ENCODE measurements at regions of chr17 and their contacts with region 1.

Region 1: DNA sequence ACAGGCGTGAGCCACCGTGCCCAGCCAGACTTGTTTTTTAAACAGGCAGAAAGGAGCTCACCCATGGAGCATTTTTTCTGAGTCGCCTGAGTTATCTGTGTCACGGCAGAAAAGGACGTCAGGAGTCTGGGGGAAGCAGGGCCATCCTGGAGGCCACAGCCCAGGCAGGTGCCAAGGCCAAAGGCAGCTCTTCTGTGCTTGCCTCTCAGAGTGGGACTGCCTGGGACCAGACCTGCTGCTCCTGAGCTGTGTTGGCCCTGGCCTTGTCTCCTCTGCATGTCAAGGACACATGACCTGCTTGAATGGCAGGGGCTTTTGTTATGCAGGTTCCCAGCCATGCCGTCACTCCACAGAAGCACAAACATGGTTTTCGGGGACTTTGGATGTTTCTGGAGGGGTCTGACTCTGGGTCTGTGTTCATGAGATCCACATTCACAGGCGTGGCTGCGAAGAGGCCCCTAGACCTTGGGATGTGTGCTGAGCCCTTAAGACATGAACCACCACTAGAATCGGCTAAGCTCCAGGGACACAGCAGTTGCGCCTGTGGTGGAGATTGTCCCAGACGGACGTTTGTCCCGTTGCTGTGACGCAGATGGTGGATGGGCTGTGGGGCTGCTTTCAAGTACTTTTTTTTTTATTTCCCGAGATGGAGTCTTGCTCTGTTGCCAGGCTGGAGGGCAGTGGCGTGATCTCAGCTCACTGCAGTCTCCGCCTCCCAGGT is 33.8 kb downstream of the FOXK2 start:
- DNase-seq: peak; percentile 29
- ATAC-seq: peak; percentile 55
- H3K4me3 Mint-ChIP-seq: no peak overlapping the region
- H3K27ac Mint-ChIP-seq: peak overlapping the region; percentile 93
- H3K4me1 Mint-ChIP-seq: peaks cover 35% of the 10 kb centered on the region
- H3K27me3 Mint-ChIP-seq: no peaks in the 10 kb centered on the region
- CTCF ChIP-seq: no peak

Region 2: DNA sequence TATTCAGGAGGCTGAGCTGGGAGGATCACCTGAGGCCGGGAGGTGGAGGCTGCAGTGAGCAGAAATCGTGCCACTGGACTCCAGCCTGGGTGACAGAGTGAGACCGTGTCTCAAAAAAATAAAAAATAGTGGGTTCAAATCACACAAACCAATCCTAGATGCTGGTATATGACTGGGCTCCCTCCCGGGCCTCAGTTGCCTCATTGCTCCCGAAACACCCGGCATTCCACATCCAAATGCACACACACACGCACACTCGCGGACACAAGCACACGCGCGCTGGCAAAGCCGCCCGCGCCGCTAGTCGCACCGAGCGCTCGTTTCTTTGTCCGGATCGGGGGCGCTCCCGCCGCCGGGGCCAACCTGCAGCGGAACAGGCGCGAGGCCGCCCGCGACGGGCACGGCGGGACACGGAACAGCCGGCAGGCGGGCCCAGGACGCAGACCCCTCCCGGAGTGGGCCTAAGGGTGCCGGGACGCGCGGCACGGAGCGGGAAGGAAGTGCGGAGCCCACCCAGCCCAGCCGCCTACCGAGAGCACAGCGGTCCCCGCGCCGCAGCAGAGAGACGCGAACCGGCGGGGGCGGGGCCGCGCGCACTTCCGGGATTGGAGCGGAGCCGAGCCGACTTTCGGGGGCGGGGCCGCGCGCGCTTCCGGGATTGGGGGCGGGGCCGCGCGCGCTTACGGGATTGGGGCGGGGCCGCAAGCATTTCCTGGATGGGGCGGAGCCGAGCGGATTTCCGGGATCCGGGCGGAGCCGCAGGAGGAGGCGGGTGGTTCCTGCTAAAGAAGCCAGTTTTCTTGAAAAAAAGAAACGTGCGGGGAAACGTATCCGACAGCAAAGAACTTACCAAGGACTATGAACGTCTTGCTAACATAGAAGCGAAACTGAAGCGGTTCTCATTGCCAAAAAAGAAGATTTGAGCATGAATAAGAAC is 102.9 kb before region 1 on chr17 and contains the start of gene CYBC1:
- CTCF ChIA-PET with region 1: no interaction called
- POLR2A ChIA-PET with region 1: no interaction called
- DNase-seq: peak; percentile 90
- ATAC-seq: peak; percentile 86
- H3K4me3 Mint-ChIP-seq: peak within 1 kb of the TSS; percentile 76
- H3K27ac Mint-ChIP-seq: peak within 1 kb of the TSS; percentile 84
- H3K4me1 Mint-ChIP-seq: peaks cover 14% of the 10 kb centered on the region
- H3K27me3 Mint-ChIP-seq: peaks cover 20% of the 10 kb centered on the region
- CTCF ChIP-seq: no peak
- total RNA-seq, gene CYBC1: 61.5 to 71.7 TPM (median 65.5 TPM) in 3 replicates

Region 3: DNA sequence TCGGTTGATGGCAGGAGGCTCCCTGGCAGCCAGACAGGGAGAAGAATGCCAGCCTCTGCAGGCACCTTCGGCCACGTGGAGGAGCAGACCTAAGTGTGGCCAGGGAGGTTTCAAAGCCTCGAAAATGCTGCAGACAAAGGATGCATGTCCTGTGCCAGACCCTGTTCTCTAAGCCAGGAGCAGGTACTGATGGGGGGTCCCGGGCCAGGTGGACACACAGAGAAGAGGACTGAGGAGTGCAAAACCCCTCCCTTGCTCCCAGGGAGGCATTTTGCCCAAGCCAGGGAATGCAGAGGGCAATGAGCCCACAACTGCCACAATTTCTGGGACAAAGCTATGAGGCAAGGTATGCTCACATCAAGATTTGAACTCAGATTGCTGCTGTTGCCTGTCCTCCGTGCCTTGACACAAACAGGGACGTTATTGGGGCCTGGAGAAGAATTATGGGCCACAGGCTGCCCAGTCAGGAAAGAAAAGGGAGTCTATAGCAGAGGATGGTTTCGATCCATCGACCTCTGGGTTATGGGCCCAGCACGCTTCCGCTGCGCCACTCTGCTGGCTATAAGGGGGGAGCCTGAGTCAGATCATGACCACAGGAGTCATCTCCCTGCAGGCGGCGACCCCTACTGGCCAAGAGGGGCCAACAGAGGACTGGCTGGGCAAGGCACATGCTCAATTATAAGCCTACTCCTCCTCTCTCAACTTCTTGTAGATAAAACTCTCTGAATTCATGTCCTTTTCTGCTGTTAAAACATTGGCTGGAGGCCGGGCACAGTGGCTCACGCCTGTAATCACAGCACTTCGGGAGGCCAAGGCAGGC is 58.9 kb before region 1 on chr17:
- CTCF ChIA-PET with region 1: interaction called, 16 read pairs
- POLR2A ChIA-PET with region 1: no interaction called
- DNase-seq: peak; percentile 90
- ATAC-seq: peak; percentile 88
- H3K4me3 Mint-ChIP-seq: peak overlapping the region; percentile 86
- H3K27ac Mint-ChIP-seq: peak overlapping the region; percentile 97
- H3K4me1 Mint-ChIP-seq: peaks cover 20% of the 10 kb centered on the region
- H3K27me3 Mint-ChIP-seq: peaks cover 39% of the 10 kb centered on the region
- CTCF ChIP-seq: peak; percentile 87

Region 4: DNA sequence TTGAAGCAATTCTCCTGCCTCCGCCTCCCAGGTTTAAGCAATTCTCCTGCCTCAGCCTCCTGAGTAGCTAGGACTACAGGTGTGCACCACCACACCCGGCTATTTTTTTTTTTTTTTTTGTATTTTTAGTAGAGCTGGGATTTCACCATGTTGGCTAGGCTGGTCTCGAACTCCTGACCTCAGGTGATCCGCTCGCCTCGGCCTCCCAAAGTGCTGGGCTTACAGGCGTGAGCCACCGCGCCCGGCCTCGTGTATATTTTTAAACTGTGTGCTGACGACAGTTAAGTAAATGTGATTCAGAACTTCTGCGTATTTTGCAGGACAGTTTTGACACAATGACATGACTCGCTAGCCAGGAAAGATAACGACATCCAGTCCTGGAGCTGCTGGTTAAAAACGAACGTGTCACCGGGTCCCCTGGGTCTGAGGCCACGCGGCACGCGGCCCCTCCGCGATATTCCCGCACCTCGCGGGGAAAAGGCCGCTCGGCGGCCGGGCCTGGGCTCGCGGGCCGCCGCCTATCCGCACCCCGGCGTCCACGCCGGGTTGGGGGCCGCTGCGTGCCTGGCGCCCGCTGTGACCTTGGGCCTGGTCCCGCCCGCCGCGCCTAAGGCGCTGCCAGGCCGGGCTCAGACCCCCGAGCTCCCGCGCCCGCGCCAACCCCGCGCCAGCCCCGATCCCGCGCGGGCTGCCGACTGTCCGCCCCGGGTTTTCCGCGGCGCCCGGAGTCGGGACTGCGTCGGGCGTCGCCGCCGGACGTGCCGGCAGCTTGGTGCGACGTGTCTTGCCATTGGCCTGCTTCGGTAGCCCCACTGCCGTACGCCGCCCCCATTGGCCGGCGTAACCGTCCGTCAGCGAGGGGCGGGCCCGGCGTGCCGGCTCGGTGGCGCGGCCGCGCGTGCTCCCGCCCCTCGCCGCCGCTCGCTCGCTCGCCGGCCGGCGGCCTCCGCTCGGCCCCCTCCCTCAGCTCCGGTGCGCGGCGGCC is 34.3 kb before region 1 on chr17 and contains the start of gene FOXK2:
- CTCF ChIA-PET with region 1: interaction called, 16 read pairs
- POLR2A ChIA-PET with region 1: no interaction called
- DNase-seq: peak; percentile 89
- ATAC-seq: peak; percentile 100
- H3K4me3 Mint-ChIP-seq: peak within 1 kb of the TSS; percentile 93
- H3K27ac Mint-ChIP-seq: peak within 1 kb of the TSS; percentile 96
- H3K4me1 Mint-ChIP-seq: peaks cover 14% of the 10 kb centered on the region
- H3K27me3 Mint-ChIP-seq: peaks cover 5% of the 10 kb centered on the region; the same call in 1 of the 2 replicates
- CTCF ChIP-seq: no peak
- total RNA-seq, gene FOXK2: 57.7 to 65.7 TPM (median 62.7 TPM) in 3 replicates

Region 5: DNA sequence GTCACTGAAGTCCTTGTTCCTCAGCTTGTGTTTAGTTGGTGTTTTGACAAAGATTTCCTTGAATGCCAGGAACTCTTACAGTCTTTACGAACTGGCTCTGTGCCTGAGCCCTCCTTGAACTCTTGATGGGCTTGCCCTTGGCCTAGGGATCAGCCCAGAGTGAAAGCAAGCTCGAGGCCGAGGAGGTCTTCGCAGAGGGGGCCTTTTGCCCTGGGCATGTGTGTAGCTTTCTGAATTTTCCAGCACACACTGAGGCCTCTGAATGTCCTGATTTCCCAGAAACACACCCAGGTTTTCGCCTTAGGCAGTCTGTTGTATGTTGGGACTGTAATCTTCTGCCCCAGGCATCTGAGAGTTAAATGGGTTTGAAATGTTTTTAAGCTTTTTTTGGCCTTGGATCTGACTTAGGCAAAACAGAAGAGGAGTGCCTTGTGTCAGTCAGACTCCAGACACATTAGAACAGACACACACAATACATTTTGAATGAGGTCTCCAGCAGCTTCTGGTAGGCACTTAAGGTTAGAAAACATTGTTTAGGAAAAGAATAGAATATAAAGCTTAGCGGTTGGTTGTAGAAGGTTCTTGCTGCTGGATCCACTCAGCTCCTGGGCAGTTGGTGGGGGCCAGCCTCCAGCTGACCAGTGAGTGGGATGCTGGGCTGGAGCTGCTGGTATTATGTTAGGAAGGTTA is 16.7 kb before region 1 on chr17:
- CTCF ChIA-PET with region 1: interaction called, 46 read pairs
- POLR2A ChIA-PET with region 1: no interaction called
- DNase-seq: no peak
- ATAC-seq: peak; percentile 55
- H3K4me3 Mint-ChIP-seq: no peak overlapping the region
- H3K27ac Mint-ChIP-seq: peak overlapping the region; percentile 88
- H3K4me1 Mint-ChIP-seq: peaks cover 34% of the 10 kb centered on the region
- H3K27me3 Mint-ChIP-seq: no peaks in the 10 kb centered on the region
- CTCF ChIP-seq: no peak

Measured in WTC11 (cell line).